ENCODE measurements at regions of chr19 and their contacts with region 1.

Region 1: DNA sequence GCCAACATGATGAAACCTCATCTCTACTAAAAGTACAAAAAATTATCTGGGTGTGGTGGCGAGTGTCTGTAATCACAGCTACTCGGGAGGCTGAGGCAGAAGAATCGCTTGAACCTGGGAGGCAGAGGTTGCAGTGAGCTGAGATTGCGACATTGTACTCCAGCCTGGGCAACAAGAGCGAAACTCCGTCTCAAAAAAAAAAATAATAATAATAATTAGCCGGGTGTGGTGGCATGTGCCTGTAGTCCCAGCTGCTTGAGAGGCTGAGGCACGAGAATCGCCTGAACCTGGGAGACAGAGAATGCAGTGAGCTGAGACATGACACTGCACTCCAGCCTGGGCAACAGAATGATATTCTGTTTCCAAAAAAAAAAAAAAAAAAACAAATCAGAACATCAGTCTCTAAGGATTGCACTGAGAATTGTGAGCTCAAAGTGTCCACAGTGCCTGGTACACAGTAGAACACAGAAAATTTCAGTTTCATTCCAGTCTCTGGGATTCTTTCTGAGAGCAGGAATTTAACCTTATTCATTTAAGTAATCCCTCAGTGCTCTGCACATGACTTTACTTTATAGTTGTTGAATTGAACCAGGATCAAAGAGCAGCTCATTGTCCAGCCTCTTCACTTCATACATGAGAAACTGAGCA is 26.1 kb upstream of the GATAD2A start:
- DNase-seq: no peak
- ATAC-seq: no peak
- H3K4me3 Mint-ChIP-seq: no peak overlapping the region
- H3K27ac Mint-ChIP-seq: no peak overlapping the region
- H3K4me1 Mint-ChIP-seq: peaks cover 2% of the 10 kb centered on the region
- H3K27me3 Mint-ChIP-seq: no peaks in the 10 kb centered on the region
- CTCF ChIP-seq: no peak

Region 2: GRCh38 chr19:19366612-19367396 is 12.6 kb before region 1 on chr19:
- CTCF ChIA-PET with region 1: interaction called, 20 read pairs
- POLR2A ChIA-PET with region 1: interaction called, 3 read pairs
- intact Hi-C with region 1: no loop called
- DNase-seq: peak; percentile 82
- ATAC-seq: peak; percentile 83
- H3K4me3 Mint-ChIP-seq: peak overlapping the region; percentile 20
- H3K27ac Mint-ChIP-seq: peak overlapping the region; percentile 53
- H3K4me1 Mint-ChIP-seq: peaks cover 16% of the 10 kb centered on the region
- H3K27me3 Mint-ChIP-seq: no peaks in the 10 kb centered on the region
- CTCF ChIP-seq: peak; percentile 79

Measured in activated CD8-positive, alpha-beta T cell treated with anti-CD3 and anti-CD28 coated beads for 36 hours (primary cell).